Heart left ventricle (tissue), 16 donors: ENCODE measurements at regions of chr10 and their contacts with region 1.

Region 1: DNA sequence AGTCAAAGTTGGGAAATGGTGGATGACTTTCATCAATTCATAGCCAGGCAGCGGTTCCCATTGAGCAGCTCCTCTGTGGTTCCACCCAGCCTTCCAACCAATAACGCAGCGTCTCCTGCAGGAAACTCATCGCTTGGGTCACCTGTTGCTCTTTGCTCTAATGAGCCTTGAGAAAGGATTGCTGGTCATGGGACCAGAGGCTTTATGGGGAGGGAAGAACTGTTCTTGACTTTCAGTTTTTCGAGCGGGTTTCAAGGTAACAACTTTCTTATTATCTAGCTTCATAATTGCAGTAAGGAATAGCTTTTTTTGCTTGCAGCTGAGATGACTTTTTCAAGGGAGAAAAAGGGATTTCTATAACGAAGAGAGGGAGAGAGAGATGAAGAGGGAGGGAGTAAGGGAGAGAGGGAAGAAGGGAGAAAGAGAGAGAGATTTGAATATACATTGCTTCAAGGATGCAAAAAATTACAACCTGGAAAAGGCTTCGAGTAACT is 405 bp upstream of the ENTPD1 start:
- DNase-seq: peak in 4 of 5 donors; percentile 47 to 61 (median 52)
- ATAC-seq: peak; percentile 35 to 81 (median 70)
- H3K4me3 ChIP-seq: peak overlapping the region in 11 of 12 donors; percentile 11 to 63 (median 49)
- H3K27ac ChIP-seq: peak overlapping the region in 11 of 12 donors; percentile 22 to 83 (median 68)
- H3K4me1 ChIP-seq: peaks cover 0 to 33% (median 1%) of the 10 kb centered on the region in 12 donors
- H3K27me3 ChIP-seq: no peaks in the 10 kb centered on the region
- CTCF ChIP-seq: peak in 1 of 12 donors; percentile 7
- POLR2A ChIP-seq: peak in 1 of 2 donors; percentile 29

Region 2: DNA sequence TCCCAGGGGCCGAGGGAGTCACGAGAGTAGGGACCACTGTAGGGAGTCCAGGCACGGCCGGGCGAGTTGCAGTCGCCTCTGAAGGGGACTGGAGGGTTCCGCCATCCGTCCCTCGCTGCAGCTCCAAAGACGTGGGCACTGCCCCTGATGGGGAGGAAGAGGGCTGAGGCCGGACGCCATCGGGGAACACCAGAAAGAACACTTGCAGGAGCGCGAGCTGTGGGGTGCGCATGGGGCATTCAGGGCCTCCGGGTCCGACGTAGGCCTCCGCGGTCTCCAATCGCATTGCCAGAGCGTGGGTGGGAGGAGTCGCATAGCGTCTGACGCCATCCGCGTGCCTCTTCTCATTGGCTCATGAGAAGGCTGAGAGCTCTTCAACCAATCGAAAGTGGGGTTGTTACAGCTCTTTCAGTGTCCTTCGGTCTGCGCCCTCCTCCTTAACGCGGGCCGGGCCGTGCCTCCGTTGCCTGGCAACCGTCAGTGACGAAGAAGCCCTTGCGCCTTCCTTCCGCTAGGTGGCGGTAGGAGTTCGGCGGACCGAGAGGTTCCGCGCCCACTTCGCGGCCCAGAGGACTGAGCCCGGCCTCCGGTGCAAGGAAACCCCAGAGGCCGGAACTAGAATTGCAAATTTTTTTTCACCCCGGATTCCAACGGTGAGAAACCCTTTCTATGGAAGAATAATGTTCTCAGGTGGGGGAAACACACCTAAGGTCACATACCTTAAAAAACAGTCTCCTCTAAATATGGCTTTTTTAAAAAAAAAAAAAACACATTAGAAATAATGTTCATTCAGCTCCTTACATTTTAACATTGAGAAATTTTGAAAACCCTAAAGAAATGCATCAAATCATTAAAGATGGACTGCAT is 61.7 kb before region 1 on chr10 and contains the start of gene TCTN3:
- intact Hi-C with region 1: no loop called
- DNase-seq: peak; percentile 97 to 98 (median 98)
- ATAC-seq: peak; percentile 100
- H3K4me3 ChIP-seq: peak within 1 kb of the TSS; percentile 64 to 95 (median 81)
- H3K27ac ChIP-seq: peak within 1 kb of the TSS in 11 of 12 donors; percentile 58 to 92 (median 80)
- H3K4me1 ChIP-seq: peaks cover 0 to 36% (median 16%) of the 10 kb centered on the region in 12 donors
- H3K27me3 ChIP-seq: no peaks in the 10 kb centered on the region
- CTCF ChIP-seq: peak; percentile 98 to 100 (median 99)
- POLR2A ChIP-seq: peak in 1 of 2 donors; percentile 80
- total RNA-seq, gene TCTN3: 9.0 to 20.6 (median 12.3) TPM

Region 3: DNA sequence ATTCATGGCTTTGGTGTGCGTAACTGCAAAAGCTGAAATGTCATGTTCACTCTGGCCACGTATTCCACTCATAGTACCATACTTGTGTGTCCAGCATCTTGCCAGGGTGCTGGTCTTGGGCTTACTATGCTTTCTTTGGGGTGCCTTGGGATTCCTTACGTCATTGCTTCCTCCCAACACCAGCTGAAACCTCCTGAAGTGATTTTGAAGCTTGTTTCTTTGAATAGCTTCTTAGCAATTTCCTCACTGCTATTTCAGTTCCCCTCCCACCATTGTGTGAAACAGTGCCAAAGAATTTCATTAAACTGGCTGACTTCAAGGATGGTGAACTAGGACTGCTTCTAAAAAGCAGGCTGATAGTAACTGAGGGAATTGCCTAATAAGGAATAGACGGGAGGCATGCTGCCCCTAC is 37.3 kb after region 1 on chr10:
- intact Hi-C with region 1: loop called in 1 of 10 experiments (anchors 5 kb)
- DNase-seq: peak in 2 of 5 donors; percentile 44 to 50
- ATAC-seq: peak; percentile 66 to 93 (median 85)
- H3K4me3 ChIP-seq: no peak overlapping the region
- H3K27ac ChIP-seq: peak overlapping the region in 11 of 12 donors; percentile 48 to 92 (median 78)
- H3K4me1 ChIP-seq: peaks cover 0 to 61% (median 22%) of the 10 kb centered on the region in 12 donors
- H3K27me3 ChIP-seq: no peaks in the 10 kb centered on the region
- CTCF ChIP-seq: no peak
- POLR2A ChIP-seq: no peak

Region 4: DNA sequence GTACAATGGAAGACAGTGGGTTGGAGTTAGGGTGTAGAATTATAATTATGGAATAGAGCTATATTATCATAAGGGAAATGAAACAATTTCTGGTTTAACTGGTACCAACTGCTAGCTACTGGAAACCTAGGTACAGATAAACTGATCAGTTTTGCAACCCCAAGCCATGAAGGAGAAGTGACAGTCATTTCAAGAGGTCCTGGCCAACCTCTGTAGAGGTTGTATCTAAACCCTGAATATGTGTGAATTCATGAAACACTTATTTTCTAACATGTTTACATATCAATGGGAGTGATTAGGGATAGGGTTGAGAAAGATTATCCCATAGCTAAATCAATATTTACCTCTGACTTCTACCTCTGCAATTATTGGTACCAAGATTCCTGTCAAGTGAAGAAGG is 122.3 kb after region 1 on chr10:
- intact Hi-C with region 1: no loop called
- DNase-seq: no peak
- ATAC-seq: no peak
- H3K4me3 ChIP-seq: no peak overlapping the region
- H3K27ac ChIP-seq: no peak overlapping the region
- H3K4me1 ChIP-seq: peaks cover 0 to 9% (median 0%) of the 10 kb centered on the region in 12 donors
- H3K27me3 ChIP-seq: no peaks in the 10 kb centered on the region
- CTCF ChIP-seq: no peak
- POLR2A ChIP-seq: no peak

Region 5: GRCh38 chr10:95909561-95909960 is 154.0 kb after region 1 on chr10:
- intact Hi-C with region 1: no loop called
- DNase-seq: no peak
- ATAC-seq: no peak
- H3K4me3 ChIP-seq: no peak overlapping the region
- H3K27ac ChIP-seq: no peak overlapping the region
- H3K4me1 ChIP-seq: peaks cover 0 to 10% (median 2%) of the 10 kb centered on the region in 12 donors
- H3K27me3 ChIP-seq: no peaks in the 10 kb centered on the region
- CTCF ChIP-seq: no peak
- POLR2A ChIP-seq: no peak

Region 6: GRCh38 chr10:95941115-95941514 is 185.6 kb after region 1 on chr10:
- intact Hi-C with region 1: no loop called
- DNase-seq: no peak
- ATAC-seq: no peak
- H3K4me3 ChIP-seq: no peak overlapping the region
- H3K27ac ChIP-seq: no peak overlapping the region
- H3K4me1 ChIP-seq: no peaks in the 10 kb centered on the region
- H3K27me3 ChIP-seq: no peaks in the 10 kb centered on the region
- CTCF ChIP-seq: no peak
- POLR2A ChIP-seq: no peak